ENCODE measurements at regions of chr1 and their contacts with region 1.

Region 1: GRCh38 chr1:181128592-181129497 is 40.3 kb downstream of the IER5 start:
- DNase-seq: peak; percentile 60
- ATAC-seq: peak; percentile 60
- H3K4me3 Mint-ChIP-seq: peak overlapping the region; percentile 90
- H3K27ac Mint-ChIP-seq: peak overlapping the region; percentile 94
- H3K4me1 Mint-ChIP-seq: peaks cover 90% of the 10 kb centered on the region
- H3K27me3 Mint-ChIP-seq: no peaks in the 10 kb centered on the region
- CTCF ChIP-seq: no peak

Region 2: DNA sequence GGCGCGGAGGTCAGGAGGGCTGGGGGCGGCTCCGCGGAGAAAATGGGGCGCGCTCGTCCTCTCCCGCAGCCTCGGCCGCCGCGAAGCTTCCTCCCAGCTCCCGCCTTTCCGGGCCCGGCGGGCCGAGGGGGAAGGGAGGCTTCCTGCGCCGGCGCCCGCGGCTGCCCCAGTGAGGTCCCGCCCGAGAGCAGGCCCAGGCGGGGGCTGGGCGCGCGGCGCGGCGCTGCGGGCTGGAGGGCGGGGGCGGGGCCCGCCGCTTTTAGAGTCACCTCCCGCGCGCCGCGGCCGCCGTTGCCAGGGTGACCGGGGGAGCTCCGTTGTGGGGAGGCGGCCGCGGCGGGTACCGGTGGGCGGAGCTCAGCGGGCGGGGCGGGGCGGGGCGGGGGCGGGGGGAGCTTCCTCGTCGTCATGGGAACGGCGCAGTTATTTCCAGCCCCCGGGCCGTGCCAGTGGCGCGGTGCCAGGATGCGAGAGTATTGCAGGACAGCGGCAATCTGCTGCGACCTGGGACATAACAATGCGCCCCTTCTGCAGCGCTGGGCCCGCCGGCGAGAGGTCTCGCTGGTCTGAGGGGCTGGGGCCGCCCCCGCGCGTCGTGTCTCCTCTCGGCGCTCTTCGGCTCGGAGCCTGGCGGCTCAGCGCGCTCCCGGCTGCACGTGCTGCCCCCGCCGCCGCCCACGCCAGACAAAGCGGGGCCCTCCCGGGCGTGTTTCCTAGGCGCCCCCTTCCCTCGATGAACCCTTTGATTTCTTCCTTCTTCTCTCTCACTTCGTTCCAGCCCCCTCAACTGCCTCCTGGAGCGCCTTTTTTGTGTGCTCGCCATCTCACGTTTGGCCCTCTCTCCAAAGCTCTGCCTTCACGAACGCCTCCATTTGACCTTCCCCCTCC is 23.5 kb before region 1 on chr1:
- CTCF ChIA-PET with region 1: interaction called, 14 read pairs
- POLR2A ChIA-PET with region 1: interaction called, 1,783 read pairs
- intact Hi-C with region 1: loop called (anchors 1 kb)
- DNase-seq: peak; percentile 88
- ATAC-seq: peak; percentile 87
- H3K4me3 Mint-ChIP-seq: peak overlapping the region; percentile 85
- H3K27ac Mint-ChIP-seq: peak overlapping the region; percentile 89
- H3K4me1 Mint-ChIP-seq: peaks cover 40% of the 10 kb centered on the region
- H3K27me3 Mint-ChIP-seq: no peaks in the 10 kb centered on the region
- CTCF ChIP-seq: no peak

Region 3: GRCh38 chr1:181117638-181118449 is 11.0 kb before region 1 on chr1:
- CTCF ChIA-PET with region 1: no interaction called
- POLR2A ChIA-PET with region 1: interaction called, 1,783 read pairs
- intact Hi-C with region 1: loop called (anchors 1 kb)
- DNase-seq: no peak
- ATAC-seq: no peak
- H3K4me3 Mint-ChIP-seq: no peak overlapping the region
- H3K27ac Mint-ChIP-seq: no peak overlapping the region
- H3K4me1 Mint-ChIP-seq: peaks cover 21% of the 10 kb centered on the region
- H3K27me3 Mint-ChIP-seq: no peaks in the 10 kb centered on the region
- CTCF ChIP-seq: no peak

Region 4: GRCh38 chr1:181263054-181263453 is 134.2 kb after region 1 on chr1:
- CTCF ChIA-PET with region 1: no interaction called
- POLR2A ChIA-PET with region 1: no interaction called
- intact Hi-C with region 1: no loop called
- DNase-seq: no peak
- ATAC-seq: no peak
- H3K4me3 Mint-ChIP-seq: no peak overlapping the region
- H3K27ac Mint-ChIP-seq: no peak overlapping the region
- H3K4me1 Mint-ChIP-seq: no peaks in the 10 kb centered on the region
- H3K27me3 Mint-ChIP-seq: peaks cover 17% of the 10 kb centered on the region
- CTCF ChIP-seq: no peak

Region 5: DNA sequence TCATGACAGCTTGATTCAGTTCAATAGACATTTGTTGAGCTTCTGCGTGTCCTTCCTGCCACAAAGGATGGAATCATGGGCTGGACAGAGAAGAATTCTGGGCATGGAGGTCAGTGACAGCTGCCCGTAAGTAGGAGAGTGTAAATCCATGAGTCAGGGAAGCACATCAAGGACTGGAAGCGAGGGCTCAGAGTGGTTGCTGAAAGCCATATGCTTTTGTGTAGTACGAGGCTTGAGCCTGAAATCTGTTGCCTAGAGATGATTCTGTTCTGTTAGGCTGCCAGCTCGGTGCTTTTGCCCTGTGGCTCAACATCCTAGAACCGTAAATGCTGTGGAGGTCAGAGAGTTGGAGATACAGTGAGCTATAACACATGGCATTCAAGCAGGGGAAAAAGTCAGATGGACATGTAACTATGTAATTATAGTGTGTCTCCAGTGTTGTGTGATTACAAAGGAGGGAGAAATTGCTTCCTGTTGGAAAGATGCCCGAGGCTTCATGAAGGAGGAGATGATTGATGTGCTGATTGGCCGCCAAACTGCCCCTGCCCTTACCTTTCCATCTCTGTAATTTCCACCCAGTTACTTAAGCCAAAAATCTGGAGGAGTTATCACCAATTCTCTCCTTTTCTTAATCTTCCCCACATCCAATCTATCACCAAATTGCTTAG is 261.7 kb after region 1 on chr1:
- CTCF ChIA-PET with region 1: no interaction called
- POLR2A ChIA-PET with region 1: no interaction called
- intact Hi-C with region 1: no loop called
- DNase-seq: no peak
- ATAC-seq: no peak
- H3K4me3 Mint-ChIP-seq: no peak overlapping the region
- H3K27ac Mint-ChIP-seq: no peak overlapping the region
- H3K4me1 Mint-ChIP-seq: no peaks in the 10 kb centered on the region
- H3K27me3 Mint-ChIP-seq: peaks cover 21% of the 10 kb centered on the region
- CTCF ChIP-seq: no peak

Region 6: GRCh38 chr1:182927693-182928433 is 1799.0 kb after region 1 on chr1:
- CTCF ChIA-PET with region 1: no interaction called
- POLR2A ChIA-PET with region 1: no interaction called
- intact Hi-C with region 1: no loop called
- DNase-seq: no peak
- ATAC-seq: peak; percentile 92
- H3K4me3 Mint-ChIP-seq: no peak overlapping the region
- H3K27ac Mint-ChIP-seq: peak overlapping the region; percentile 78
- H3K4me1 Mint-ChIP-seq: peaks cover 16% of the 10 kb centered on the region
- H3K27me3 Mint-ChIP-seq: peaks cover 5% of the 10 kb centered on the region
- CTCF ChIP-seq: no peak